ENCODE measurements at regions of chr20 and their contacts with region 1.

Region 1: GRCh38 chr20:29123861-29124260 is 2133.6 kb upstream of the DEFB115 start:
- DNase-seq: no peak
- H3K4me3 ChIP-seq: no peak overlapping the region
- H3K27ac ChIP-seq: no peak overlapping the region
- H3K27me3 ChIP-seq: peaks cover 0 to 34% (median 6%) of the 10 kb centered on the region in 45 donors
- CTCF ChIP-seq: no peak

Region 2: DNA sequence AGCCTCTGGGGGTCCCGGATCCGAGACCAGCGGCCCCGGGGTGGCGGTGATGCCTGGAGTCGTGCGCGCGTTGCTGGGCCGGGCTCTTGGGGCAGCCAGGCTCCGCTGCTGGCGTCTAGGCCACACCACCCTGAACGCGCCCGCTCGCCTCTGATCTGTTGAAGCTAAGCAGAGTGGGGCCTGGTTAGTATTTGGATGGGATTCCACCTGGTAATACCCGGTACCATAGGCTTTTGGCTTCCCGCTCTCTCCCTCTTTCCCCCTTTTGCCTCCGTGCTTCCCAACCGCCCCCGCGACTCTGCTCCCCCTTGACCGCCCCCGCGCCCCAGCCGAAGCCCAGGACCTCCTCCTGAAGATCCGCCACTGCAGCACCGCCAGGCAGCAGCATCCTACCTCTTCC is 750.1 kb after region 1 on chr20:
- intact Hi-C with region 1: loop called in 1 of 2 experiments (anchors 10 kb)
- DNase-seq: peak in 7 of 10 donors; percentile 32 to 75 (median 41)
- H3K4me3 ChIP-seq: no peak overlapping the region
- H3K27ac ChIP-seq: no peak overlapping the region
- H3K27me3 ChIP-seq: peaks cover 0 to 23% (median 0%) of the 10 kb centered on the region in 45 donors
- CTCF ChIP-seq: no peak